Aorta (tissue), 5 donors: ENCODE measurements at regions of chr2 and their contacts with region 1.

Region 1: GRCh38 chr2:171433763-171434670 is at the starts of genes DCAF17 and METTL8:
- DNase-seq: peak; percentile 97 to 98
- ATAC-seq: peak; percentile 99
- H3K4me3 ChIP-seq: peak within 1 kb of the TSS; percentile 62 to 86
- H3K27ac ChIP-seq: peak within 1 kb of the TSS; percentile 19 to 64
- H3K4me1 ChIP-seq: peaks cover 0 to 3% of the 10 kb centered on the region in 2 donors
- H3K27me3 ChIP-seq: no peaks in the 10 kb centered on the region
- total RNA-seq, gene DCAF17: 17.5 to 20.3 TPM
- total RNA-seq, gene METTL8: 18.4 to 26.2 TPM

Region 2: GRCh38 chr2:171390941-171391516 is 43.0 kb before region 1 on chr2:
- intact Hi-C with region 1: no loop called
- DNase-seq: no peak
- ATAC-seq: no peak
- H3K4me3 ChIP-seq: no peak overlapping the region
- H3K27ac ChIP-seq: no peak overlapping the region
- H3K4me1 ChIP-seq: peaks cover 0 to 2% of the 10 kb centered on the region in 2 donors
- H3K27me3 ChIP-seq: no peaks in the 10 kb centered on the region

Region 3: GRCh38 chr2:171522052-171522787 is 88.2 kb after region 1 on chr2 and contains the start of gene CYBRD1:
- intact Hi-C with region 1: loop called in 1 of 2 experiments (anchors 2 kb)
- DNase-seq: peak; percentile 95 to 96
- ATAC-seq: peak; percentile 94
- H3K4me3 ChIP-seq: peak within 1 kb of the TSS; percentile 81 to 96
- H3K27ac ChIP-seq: peak within 1 kb of the TSS; percentile 87 to 92
- H3K4me1 ChIP-seq: peaks cover 0 to 2% of the 10 kb centered on the region in 2 donors
- H3K27me3 ChIP-seq: no peaks in the 10 kb centered on the region
- total RNA-seq, gene CYBRD1: 200 to 396 TPM

Region 4: DNA sequence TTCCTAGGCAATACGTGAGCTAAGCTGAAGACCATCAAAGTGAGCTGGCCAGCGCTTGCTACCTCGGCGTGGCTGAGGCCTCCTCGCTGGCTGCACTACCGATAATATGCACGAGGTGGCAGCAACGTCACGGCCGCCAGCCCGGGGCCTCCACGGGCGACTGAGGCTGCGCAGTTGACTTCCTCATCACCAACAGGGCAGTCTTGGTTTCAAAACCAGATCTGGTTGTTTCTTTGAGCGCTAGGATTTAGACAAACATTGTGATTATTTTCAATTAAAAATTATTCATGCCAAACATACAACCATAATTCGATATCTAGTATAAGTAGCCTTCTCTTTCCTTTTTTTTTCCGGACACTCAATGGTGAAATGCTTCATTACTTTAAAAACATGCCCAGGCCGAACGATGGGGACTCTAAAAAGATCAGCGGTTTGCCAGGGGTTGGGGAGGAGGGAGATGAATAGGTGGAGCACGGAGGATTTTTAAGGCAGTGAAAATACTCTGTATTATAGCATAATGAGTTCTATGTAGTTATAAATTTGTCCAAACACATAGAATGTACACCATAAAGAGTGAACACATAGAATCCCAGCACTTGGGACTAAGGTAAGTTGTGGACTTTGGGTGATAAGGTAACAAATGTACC is 140.3 kb after region 1 on chr2:
- intact Hi-C with region 1: no loop called
- DNase-seq: peak; percentile 87 to 95
- ATAC-seq: peak; percentile 95
- H3K4me3 ChIP-seq: no peak overlapping the region
- H3K27ac ChIP-seq: no peak overlapping the region
- H3K4me1 ChIP-seq: no peaks in the 10 kb centered on the region
- H3K27me3 ChIP-seq: no peaks in the 10 kb centered on the region